WTC11 (cell line): ENCODE measurements at regions of chr1 and their contacts with region 1.

Region 1: DNA sequence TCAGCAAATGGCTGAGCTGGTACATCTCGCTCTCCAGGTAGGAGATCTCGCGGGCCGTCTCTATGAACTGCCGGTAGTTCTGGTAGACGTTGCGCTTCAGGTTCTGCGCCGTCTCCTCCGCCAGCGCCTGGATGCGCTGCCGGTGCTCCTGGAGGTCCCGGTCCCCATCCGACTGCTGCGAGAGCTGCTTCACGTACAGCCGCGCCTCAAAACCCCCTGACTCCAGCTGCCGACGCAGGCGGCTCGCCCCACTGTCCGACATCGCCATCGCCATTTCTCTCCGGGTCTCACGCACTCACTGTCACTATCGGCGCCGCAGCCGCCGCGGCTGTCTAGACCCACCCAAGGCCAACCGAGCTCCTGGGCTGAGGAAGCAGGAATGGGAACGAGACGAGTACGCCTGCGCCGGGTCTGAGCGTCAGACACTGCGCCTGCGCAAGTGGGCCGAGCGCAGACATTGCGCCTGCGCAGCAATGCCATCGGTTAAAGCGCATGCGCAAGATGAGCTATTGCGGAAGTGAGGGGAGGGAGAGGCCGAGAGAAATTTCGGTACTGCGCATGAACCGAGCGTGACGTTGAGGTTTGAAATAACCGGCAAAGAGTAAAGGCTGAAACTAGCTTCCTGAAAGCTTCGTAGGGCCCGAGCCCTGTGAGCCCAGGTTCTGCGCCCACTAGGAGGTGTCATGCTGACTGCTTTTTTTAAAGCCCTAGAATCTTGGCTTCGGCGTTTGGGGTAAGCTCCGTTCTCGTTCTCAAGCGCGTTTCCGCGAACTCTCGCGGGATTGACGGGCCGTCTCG is at the start of gene EXOC8:
- DNase-seq: peak; percentile 97
- ATAC-seq: peak; percentile 86
- H3K4me3 Mint-ChIP-seq: peak within 1 kb of the TSS; percentile 98
- H3K27ac Mint-ChIP-seq: peak within 1 kb of the TSS; percentile 98
- H3K4me1 Mint-ChIP-seq: peaks cover 40% of the 10 kb centered on the region
- H3K27me3 Mint-ChIP-seq: peaks cover 4% of the 10 kb centered on the region
- CTCF ChIP-seq: no peak
- total RNA-seq, gene EXOC8: 9.1 to 11.3 TPM (median 10.2 TPM) in 3 replicates

Region 2: DNA sequence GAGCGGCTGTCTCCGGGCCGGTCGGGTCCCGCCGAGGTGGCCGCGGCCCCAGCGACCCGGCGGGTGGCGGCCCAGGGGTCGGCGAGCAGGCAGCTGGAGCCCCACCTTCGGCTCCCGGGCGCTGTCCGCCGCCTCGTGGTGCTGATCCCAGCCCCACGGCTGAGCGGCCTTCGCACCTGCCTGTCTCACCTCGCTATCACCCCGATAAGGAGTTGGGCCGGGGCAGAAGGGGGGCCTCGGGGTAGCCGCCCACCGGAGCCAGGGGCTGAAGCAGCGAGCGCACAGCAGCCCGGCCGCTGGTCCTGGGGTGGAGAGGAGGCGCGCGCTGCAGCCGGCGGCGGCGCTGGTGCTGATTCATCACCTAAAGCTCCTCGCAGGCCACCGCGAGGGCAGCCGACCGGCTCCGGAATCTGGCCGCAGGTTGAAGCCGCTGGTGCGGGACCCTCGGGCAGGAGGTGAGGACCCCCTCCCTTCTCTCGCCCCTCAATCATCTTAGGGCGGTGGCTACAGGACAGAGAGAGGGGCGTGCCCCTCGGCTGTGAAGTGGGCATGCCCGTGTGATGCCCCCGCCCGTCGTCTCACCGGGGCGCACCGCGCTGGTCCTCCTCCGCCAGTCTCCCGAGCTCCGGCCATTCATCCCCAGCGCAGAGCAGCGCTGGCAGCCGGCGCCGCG is 175.2 kb before region 1 on chr1:
- CTCF ChIA-PET with region 1: no interaction called
- POLR2A ChIA-PET with region 1: no interaction called
- DNase-seq: peak; percentile 69
- ATAC-seq: peak; percentile 65
- H3K4me3 Mint-ChIP-seq: peak overlapping the region; percentile 53
- H3K27ac Mint-ChIP-seq: no peak overlapping the region
- H3K4me1 Mint-ChIP-seq: no peaks in the 10 kb centered on the region
- H3K27me3 Mint-ChIP-seq: peaks cover 95% of the 10 kb centered on the region
- CTCF ChIP-seq: no peak

Region 3: GRCh38 chr1:231315887-231316286 is 21.8 kb before region 1 on chr1:
- CTCF ChIA-PET with region 1: interaction called, 10 read pairs
- POLR2A ChIA-PET with region 1: no interaction called
- DNase-seq: peak; percentile 80
- ATAC-seq: peak; percentile 99
- H3K4me3 Mint-ChIP-seq: no peak overlapping the region
- H3K27ac Mint-ChIP-seq: no peak overlapping the region
- H3K4me1 Mint-ChIP-seq: no peaks in the 10 kb centered on the region
- H3K27me3 Mint-ChIP-seq: peaks cover 9% of the 10 kb centered on the region
- CTCF ChIP-seq: 0 out of 2 replicates have a peak, but pooled peaks have one; percentile 45

Region 4: DNA sequence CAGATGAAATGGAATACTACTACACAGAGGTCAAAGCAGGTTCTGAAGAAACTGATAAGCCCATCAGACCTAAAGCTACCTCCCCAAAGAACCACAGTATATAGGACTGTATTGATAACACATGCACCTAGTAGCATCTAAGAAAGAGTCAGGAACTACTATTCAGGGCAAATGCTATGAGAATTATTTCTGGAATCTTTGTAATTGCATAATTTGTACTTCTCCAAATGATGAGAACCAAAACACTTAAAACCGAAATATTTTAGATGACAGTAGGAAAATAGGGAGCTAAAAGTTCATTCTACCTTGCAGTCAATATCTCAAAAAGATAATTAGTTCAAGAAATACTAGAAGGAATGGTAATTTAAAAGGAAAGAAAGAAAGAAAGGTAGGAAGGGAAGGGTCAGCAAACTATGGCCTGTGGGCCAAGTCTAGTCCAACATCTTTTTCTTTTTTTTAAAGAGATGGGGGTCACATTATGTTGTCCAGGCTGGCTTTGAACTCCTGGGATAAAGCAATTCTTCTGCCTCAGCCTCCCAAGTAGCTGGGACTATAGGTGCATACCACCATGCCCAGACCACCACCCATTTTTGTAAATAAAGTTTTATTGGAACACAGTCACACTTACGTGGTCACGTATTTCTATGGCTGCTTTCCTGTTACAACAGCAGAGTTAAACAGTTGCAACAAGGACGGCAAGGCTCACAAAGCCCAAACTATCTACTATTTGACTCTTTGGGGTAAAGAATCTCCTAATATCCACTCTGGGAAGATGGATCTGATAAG is 60.4 kb after region 1 on chr1:
- CTCF ChIA-PET with region 1: no interaction called
- POLR2A ChIA-PET with region 1: no interaction called
- DNase-seq: no peak
- ATAC-seq: no peak
- H3K4me3 Mint-ChIP-seq: no peak overlapping the region
- H3K27ac Mint-ChIP-seq: no peak overlapping the region
- H3K4me1 Mint-ChIP-seq: peaks cover 18% of the 10 kb centered on the region
- H3K27me3 Mint-ChIP-seq: no peaks in the 10 kb centered on the region
- CTCF ChIP-seq: no peak

Region 5: DNA sequence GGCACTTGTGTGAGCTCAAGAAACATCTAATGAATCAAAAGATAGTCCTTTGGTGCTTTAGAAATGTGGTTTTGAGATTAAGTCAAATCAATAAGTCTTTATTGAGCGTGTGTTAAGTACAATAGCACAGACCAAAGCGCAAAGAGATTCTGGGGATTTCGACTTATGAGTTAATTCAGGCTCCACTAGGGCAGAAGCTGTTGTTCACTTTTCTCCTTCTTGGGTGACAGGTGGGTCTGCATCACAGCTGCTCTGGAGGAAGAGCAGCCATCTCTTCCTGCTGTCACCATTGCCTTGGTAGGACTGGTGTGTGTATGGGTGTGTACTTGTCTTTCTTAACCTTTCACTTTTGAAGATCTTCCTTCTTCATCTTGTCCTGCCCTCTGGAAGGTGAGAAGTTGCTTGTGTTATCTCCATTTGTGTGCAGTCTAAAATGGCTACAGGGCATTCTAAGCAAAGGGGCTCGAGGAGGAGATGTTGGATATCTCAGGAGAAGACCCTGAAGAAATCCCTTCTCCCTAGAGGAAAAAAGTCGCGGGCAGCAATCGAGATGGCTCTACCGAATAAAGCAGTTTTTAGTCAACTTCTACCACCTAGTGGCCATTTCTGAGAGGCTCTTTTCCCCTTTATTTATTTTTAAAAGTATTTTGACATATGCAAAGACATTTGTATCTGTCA is 266.1 kb after region 1 on chr1:
- CTCF ChIA-PET with region 1: interaction called, 10 read pairs
- POLR2A ChIA-PET with region 1: no interaction called
- DNase-seq: peak; percentile 32
- ATAC-seq: peak; percentile 67
- H3K4me3 Mint-ChIP-seq: peak overlapping the region; percentile 44
- H3K27ac Mint-ChIP-seq: no peak overlapping the region
- H3K4me1 Mint-ChIP-seq: peaks cover 13% of the 10 kb centered on the region
- H3K27me3 Mint-ChIP-seq: peaks cover 8% of the 10 kb centered on the region; the same call in 1 of the 2 replicates
- CTCF ChIP-seq: peak; percentile 39; the same call in 1 of the 2 replicates